A549 (cell line): ENCODE measurements at regions of chr11 and their contacts with region 1.

Region 1: DNA sequence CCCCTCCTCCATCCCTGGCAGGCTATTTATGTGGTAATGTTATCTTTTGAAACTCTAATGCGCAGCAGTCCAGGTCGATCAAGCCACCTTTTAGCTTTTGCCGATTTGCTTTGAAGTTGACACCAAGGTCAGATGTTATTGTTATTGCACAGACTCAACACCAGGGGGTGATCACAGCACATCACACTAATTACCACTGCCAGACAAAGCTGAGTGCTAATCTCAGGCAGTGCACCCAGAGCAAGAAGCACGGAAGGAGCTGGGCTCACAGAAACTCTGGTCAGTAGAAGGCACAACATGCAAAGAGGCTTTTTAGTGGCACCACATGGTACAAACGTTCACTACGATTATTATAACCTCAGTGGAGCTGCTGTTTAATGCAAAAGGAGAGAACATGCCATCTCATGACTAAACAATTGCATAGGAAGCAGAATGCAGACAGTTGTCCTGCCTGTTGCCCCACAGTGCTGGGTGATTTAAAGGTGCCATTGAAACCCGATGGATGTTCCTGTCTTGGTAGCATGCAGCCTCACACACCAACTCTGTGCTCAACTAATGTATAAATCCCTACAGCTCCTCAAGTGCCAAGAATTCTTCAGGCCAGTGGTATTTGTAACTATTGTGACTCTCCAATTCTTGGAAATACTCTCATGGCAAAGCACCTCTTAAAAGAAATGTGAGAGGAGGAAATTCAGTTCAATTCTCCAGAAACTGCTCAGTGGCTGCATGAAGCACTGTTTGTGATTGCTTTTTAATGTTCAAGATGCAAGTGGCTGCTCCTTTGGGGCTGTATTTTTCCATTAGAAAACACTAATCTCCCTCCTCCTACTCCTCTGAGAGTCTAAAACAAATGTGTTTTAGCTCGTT is 353.9 kb upstream of the DDI1 start:
- DNase-seq: peak; percentile 23 to 82
- ATAC-seq: peak; percentile 89 to 98
- H3K4me3 ChIP-seq: no peak overlapping the region
- H3K27ac ChIP-seq: peak overlapping the region; percentile 66 to 85
- H3K4me1 ChIP-seq: peaks cover 12% of the 10 kb centered on the region
- CTCF ChIP-seq: peak; percentile 66
- EP300 ChIP-seq: no peak
- POLR2A ChIP-seq: no peak
- RAD21 ChIP-seq: peak; percentile 87 to 92

Region 2: GRCh38 chr11:103413266-103413888 is 269.2 kb before region 1 on chr11:
- CTCF ChIA-PET with region 1: no interaction called
- POLR2A ChIA-PET with region 1: no interaction called
- DNase-seq: no peak
- ATAC-seq: no peak
- H3K4me3 ChIP-seq: no peak overlapping the region
- H3K27ac ChIP-seq: no peak overlapping the region
- H3K4me1 ChIP-seq: no peaks in the 10 kb centered on the region
- CTCF ChIP-seq: no peak
- EP300 ChIP-seq: no peak
- POLR2A ChIP-seq: no peak
- RAD21 ChIP-seq: no peak

Region 3: GRCh38 chr11:103671143-103671651 is 11.4 kb before region 1 on chr11:
- CTCF ChIA-PET with region 1: interaction called, 11 read pairs
- POLR2A ChIA-PET with region 1: no interaction called
- DNase-seq: no peak
- ATAC-seq: no peak
- H3K4me3 ChIP-seq: no peak overlapping the region
- H3K27ac ChIP-seq: no peak overlapping the region
- H3K4me1 ChIP-seq: 0 out of 3 replicates have a peak, but pooled peaks cover 3% of the 10 kb centered on the region
- CTCF ChIP-seq: no peak
- EP300 ChIP-seq: no peak
- POLR2A ChIP-seq: no peak
- RAD21 ChIP-seq: no peak